CD4-positive, alpha-beta T cell (primary cell): ENCODE measurements at regions of chr4 and their contacts with region 1.

Region 1: GRCh38 chr4:37693450-37694190 is 7.4 kb upstream of the RELL1 start:
- DNase-seq: no peak
- ATAC-seq: no peak
- H3K4me3 ChIP-seq: no peak overlapping the region
- H3K4me3 Mint-ChIP-seq: no peak overlapping the region
- H3K27ac ChIP-seq: no peak overlapping the region
- H3K27ac Mint-ChIP-seq: no peak overlapping the region
- H3K4me1 ChIP-seq: no peaks in the 10 kb centered on the region
- H3K4me1 Mint-ChIP-seq: no peaks in the 10 kb centered on the region
- H3K27me3 ChIP-seq: no peaks in the 10 kb centered on the region
- H3K27me3 Mint-ChIP-seq: no peaks in the 10 kb centered on the region
- CTCF ChIP-seq: no peak

Region 2: DNA sequence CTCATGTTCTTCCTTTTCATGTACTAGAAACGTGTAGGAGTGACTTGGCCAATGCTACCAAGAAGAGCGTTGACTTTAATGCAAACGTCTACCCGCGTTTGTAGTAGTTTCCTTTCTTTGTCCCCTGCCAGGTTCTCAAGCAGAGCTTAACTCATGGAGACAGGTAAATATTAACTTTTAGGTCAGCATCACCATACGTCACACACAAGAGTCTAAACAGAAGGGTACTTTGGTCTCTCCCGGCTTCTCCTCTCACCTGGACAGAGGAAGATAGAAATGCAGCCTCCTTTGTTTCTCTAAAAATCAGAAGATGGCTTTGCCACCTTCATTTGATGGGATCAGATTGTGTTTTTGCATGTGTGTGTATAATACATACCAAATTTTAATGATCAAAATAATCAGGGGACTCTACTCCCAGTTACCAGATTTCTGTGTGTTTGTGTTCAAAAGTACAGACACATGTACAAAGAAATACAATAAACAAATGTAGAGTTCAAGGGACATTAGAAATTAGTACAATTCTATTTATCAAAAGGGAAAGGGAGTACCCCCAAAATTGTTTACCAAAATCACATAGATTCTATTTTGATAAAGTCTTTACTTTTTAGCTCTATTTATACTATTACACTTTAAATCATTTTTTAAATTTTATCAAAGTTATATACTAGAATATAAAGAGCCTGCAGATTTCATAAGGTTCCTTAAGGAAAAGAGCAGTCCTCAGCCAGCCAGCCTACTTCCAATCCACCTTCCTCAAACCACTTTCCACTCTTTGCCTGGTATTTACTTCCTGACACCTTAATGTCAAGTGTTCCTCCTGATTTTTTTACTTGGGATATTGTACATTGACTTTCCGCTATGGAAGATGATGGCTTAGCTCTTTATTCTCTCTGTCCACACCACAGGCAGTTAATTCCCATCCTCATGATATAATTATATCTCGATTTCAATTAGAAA is 203.0 kb before region 1 on chr4:
- CTCF ChIA-PET with region 1: no interaction called
- POLR2A ChIA-PET with region 1: no interaction called
- intact Hi-C with region 1: no loop called
- DNase-seq: no peak
- ATAC-seq: no peak
- H3K4me3 ChIP-seq: no peak overlapping the region
- H3K4me3 Mint-ChIP-seq: no peak overlapping the region
- H3K27ac ChIP-seq: no peak overlapping the region
- H3K27ac Mint-ChIP-seq: no peak overlapping the region
- H3K4me1 ChIP-seq: no peaks in the 10 kb centered on the region
- H3K4me1 Mint-ChIP-seq: no peaks in the 10 kb centered on the region
- H3K27me3 ChIP-seq: peaks cover 0 to 8% of the 10 kb centered on the region in 2 experiments
- H3K27me3 Mint-ChIP-seq: peaks cover 19% of the 10 kb centered on the region
- CTCF ChIP-seq: no peak

Region 3: GRCh38 chr4:37770016-37770415 is 76.4 kb after region 1 on chr4:
- CTCF ChIA-PET with region 1: no interaction called
- POLR2A ChIA-PET with region 1: no interaction called
- intact Hi-C with region 1: loop called in 1 of 2 experiments (anchors 5 kb)
- DNase-seq: no peak
- ATAC-seq: no peak
- H3K4me3 ChIP-seq: no peak overlapping the region
- H3K4me3 Mint-ChIP-seq: no peak overlapping the region
- H3K27ac ChIP-seq: no peak overlapping the region
- H3K27ac Mint-ChIP-seq: no peak overlapping the region
- H3K4me1 ChIP-seq: peaks cover 4% of the 10 kb centered on the region
- H3K4me1 Mint-ChIP-seq: peaks cover 6% of the 10 kb centered on the region
- H3K27me3 ChIP-seq: no peaks in the 10 kb centered on the region
- H3K27me3 Mint-ChIP-seq: no peaks in the 10 kb centered on the region
- CTCF ChIP-seq: no peak